Panc1 (cell line): ENCODE measurements at regions of chr16 and their contacts with region 1.

Region 1: GRCh38 chr16:1105888-1106620 is 10.0 kb upstream of the C1QTNF8 start:
- DNase-seq: no peak
- ATAC-seq: peak; percentile 80
- H3K4me3 ChIP-seq: peak overlapping the region; percentile 11 to 33; a peak in 1 of 4 replicates
- H3K27ac ChIP-seq: peak overlapping the region; percentile 29; the same call in 1 of the 2 replicates
- H3K4me1 ChIP-seq: peaks cover 33% of the 10 kb centered on the region
- H3K27me3 ChIP-seq: no peaks in the 10 kb centered on the region
- CTCF ChIP-seq: peak; percentile 88

Region 2: GRCh38 chr16:1152651-1153259 is 46.7 kb after region 1 on chr16 and contains the start of gene CACNA1H:
- CTCF ChIA-PET with region 1: no interaction called
- POLR2A ChIA-PET with region 1: no interaction called
- in situ Hi-C with region 1: no loop called
- intact Hi-C with region 1: no loop called
- DNase-seq: no peak
- ATAC-seq: peak; percentile 48
- H3K4me3 ChIP-seq: peak within 1 kb of the TSS; percentile 43 to 46
- H3K27ac ChIP-seq: peak within 1 kb of the TSS; percentile 59
- H3K4me1 ChIP-seq: peaks cover 34% of the 10 kb centered on the region
- H3K27me3 ChIP-seq: no peaks in the 10 kb centered on the region
- CTCF ChIP-seq: no peak; the same call in 1 of the 2 replicates
- total RNA-seq, gene CACNA1H: 31.1 TPM

Region 3: DNA sequence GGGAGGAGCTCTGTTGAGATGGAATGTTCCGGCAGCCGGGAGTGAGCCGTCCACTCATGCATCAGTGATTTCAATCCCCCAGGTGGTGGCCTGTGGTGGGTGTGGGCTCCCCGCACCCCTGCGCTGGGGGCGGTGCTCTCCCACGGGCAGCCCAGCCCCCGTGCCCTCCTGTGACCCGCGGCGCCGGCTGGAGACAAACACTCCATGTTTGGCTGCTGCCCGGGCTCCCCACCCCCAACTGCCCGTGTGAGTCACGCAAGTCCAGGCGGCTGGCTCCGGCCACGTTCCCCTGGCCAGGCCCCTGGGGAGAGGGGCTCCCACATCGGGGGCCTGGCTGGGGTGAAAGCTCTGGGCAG is 76.2 kb after region 1 on chr16:
- CTCF ChIA-PET with region 1: interaction called, 11 read pairs
- POLR2A ChIA-PET with region 1: no interaction called
- in situ Hi-C with region 1: no loop called
- intact Hi-C with region 1: no loop called
- DNase-seq: no peak
- ATAC-seq: peak; percentile 55
- H3K4me3 ChIP-seq: no peak overlapping the region
- H3K27ac ChIP-seq: peak overlapping the region; percentile 48
- H3K4me1 ChIP-seq: peaks cover 31% of the 10 kb centered on the region
- H3K27me3 ChIP-seq: no peaks in the 10 kb centered on the region
- CTCF ChIP-seq: no peak

Region 4: DNA sequence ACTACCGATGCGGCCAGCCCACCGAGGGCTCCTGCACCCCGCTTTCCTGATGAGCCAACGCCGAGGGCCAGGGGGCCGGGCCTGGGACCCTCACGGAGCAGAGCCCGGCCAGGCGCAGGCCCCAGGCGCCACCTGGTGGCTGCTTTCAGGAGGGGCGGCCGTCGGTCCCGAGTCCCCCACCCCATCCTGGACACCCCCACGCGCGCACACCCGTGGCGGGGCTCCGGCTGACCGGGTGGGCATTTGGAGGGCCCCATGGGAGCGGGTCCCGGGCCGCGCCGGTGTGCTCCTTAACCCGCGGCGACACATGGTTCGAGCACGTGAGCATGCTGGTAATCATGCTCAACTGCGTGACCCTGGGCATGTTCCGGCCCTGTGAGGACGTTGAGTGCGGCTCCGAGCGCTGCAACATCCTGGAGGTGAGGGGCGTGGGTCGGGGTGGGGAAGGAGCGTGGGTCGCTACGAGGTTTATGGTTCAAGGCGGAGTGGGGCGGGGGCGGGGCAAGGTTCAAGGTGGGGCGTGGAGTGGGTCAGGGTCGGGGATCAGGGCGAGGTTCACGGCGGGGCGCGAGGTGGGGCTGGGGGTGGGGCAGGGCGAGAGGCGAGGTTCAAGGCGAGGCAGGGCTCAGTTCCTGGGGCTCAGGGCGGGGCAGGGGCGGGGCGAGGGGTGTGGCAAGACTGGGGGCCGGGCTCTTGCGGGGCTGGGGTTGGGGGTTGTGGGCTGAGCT is 88.8 kb after region 1 on chr16:
- CTCF ChIA-PET with region 1: interaction called, 3 read pairs
- POLR2A ChIA-PET with region 1: no interaction called
- in situ Hi-C with region 1: no loop called
- intact Hi-C with region 1: loop called (anchors 2 kb)
- DNase-seq: no peak
- ATAC-seq: no peak
- H3K4me3 ChIP-seq: peak overlapping the region in 1 of 2 experiments; percentile 23; a peak in 1 of 4 replicates
- H3K27ac ChIP-seq: no peak overlapping the region
- H3K4me1 ChIP-seq: peaks cover 34% of the 10 kb centered on the region
- H3K27me3 ChIP-seq: no peaks in the 10 kb centered on the region
- CTCF ChIP-seq: peak; percentile 96

Region 5: DNA sequence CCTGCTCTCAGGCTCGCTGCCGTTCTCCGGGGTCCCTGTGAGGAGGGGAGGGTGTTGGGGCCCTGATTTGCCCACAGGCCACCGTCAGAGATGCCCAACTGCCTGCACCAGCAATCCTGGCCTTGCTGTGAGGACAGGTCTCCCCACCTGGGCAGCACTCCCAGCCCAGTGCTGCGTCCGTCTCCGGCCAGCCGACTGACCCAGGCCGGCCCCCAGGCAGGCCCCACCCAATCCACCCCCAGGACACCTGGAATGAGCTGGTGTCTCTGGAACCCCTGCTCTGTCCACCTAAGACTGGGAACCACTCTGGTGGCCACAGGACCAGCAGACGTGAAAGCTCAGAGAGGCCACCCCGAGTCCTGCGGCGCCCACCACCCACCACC is 1009.5 kb after region 1 on chr16:
- CTCF ChIA-PET with region 1: no interaction called
- POLR2A ChIA-PET with region 1: no interaction called
- in situ Hi-C with region 1: no loop called
- intact Hi-C with region 1: no loop called
- DNase-seq: no peak
- ATAC-seq: no peak
- H3K4me3 ChIP-seq: no peak overlapping the region
- H3K27ac ChIP-seq: no peak overlapping the region
- H3K4me1 ChIP-seq: peaks cover under 1% of the 10 kb centered on the region; the same call in 1 of the 2 replicates
- H3K27me3 ChIP-seq: no peaks in the 10 kb centered on the region
- CTCF ChIP-seq: no peak